T-cell (primary cell): ENCODE measurements at regions of chr3 and their contacts with region 1.

Region 1: DNA sequence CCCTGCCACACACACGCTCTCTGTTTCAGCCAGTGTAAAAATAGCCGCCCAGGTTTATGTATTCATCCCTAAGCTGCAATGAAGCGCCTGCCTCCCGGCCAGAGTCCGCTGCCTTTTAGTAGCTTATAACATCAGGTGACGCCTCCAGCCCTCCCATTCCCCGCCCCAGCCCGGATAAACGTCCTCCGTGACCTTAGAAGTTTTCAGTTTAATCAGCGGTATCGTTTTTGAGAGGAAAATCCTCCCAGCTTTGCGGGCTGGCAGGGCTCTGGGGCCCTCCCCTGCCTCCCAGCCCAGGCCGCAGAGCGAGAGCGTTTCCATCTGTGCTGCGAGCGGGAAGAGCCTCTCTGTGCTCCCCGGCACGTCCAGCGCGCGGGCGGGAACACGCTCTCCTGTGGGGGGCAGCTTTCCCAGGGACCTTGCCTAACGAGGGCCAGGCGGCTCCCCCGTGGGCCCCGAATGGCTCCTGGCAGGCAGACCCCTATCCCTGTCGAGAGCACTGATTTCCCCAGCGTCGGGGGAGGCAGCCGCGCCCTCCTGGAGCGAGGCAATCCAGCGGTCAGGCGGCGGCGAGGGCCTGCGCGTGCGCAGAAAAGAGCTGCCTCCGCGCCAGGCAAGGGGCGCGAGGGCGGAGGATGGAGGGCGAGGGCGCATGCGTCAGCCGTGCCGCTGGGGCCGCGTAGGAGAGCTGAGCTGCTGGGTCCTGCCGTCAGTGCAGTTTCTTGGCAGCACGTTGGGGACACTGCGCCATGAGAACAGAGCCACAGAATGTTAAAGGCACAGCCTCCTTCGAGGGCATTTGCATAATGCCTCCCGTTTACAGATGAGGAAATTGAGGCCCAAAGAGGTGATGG is 71.1 kb downstream of the CCNL1 start:
- DNase-seq: peak; percentile 83 to 97 (median 91)
- ATAC-seq: peak; percentile 91 to 98 (median 96)
- H3K4me3 ChIP-seq: peak overlapping the region; percentile 80 to 93
- H3K4me3 Mint-ChIP-seq: peak overlapping the region; percentile 84 to 87 (median 86)
- H3K27ac ChIP-seq: peak overlapping the region; percentile 97
- H3K27ac Mint-ChIP-seq: peak overlapping the region; percentile 95 to 97
- H3K4me1 ChIP-seq: peaks cover 7 to 36% of the 10 kb centered on the region in 2 experiments
- H3K4me1 Mint-ChIP-seq: peaks cover 23 to 41% (median 31%) of the 10 kb centered on the region in 3 donors
- H3K27me3 ChIP-seq: no peaks in the 10 kb centered on the region
- H3K27me3 Mint-ChIP-seq: no peaks in the 10 kb centered on the region

Region 2: DNA sequence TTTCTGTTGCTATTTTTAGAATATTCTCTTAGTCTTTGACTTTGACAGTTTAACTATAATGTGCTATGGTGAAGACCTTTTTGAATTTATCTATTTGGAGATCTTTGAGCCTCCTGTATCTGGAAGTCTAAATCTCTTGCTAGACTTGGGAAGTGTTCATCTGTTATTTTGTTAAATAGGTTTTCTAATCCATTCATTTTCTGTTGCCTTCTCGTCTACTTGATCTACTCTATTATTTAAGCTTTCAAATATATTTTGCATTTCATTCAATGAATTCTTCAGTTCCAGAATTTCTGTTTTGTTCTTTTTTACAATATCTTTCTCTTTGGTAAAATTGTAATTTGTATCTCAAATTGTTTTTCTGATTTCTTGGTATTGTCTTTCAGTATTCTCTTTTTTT is 214.9 kb before region 1 on chr3:
- CTCF ChIA-PET with region 1: no interaction called
- POLR2A ChIA-PET with region 1: no interaction called
- DNase-seq: no peak
- ATAC-seq: no peak
- H3K4me3 ChIP-seq: no peak overlapping the region
- H3K4me3 Mint-ChIP-seq: no peak overlapping the region
- H3K27ac ChIP-seq: no peak overlapping the region
- H3K27ac Mint-ChIP-seq: no peak overlapping the region
- H3K4me1 ChIP-seq: no peaks in the 10 kb centered on the region
- H3K4me1 Mint-ChIP-seq: no peaks in the 10 kb centered on the region
- H3K27me3 ChIP-seq: no peaks in the 10 kb centered on the region
- H3K27me3 Mint-ChIP-seq: peaks cover 0 to 4% of the 10 kb centered on the region in 2 donors

Region 3: DNA sequence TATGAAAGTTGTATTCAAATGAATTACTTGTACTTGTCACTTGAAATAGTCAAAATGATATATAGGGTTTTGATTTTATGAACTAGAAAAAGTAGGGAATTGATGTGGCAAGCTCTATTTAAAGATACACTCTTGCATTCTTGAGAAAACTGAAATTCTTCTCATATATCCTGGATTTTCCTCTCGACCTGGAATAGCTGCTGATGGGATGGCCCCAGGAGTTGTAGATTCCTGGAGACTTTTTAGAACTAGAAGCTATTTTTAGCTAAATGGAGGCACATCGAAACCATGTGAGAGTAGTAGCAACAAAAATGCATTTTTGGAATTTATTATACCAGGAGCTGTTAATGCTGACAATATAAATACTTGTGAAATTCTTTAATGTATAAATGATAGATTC is 136.8 kb before region 1 on chr3:
- CTCF ChIA-PET with region 1: no interaction called
- POLR2A ChIA-PET with region 1: no interaction called
- DNase-seq: no peak
- ATAC-seq: no peak
- H3K4me3 ChIP-seq: no peak overlapping the region
- H3K4me3 Mint-ChIP-seq: no peak overlapping the region
- H3K27ac ChIP-seq: no peak overlapping the region
- H3K27ac Mint-ChIP-seq: no peak overlapping the region
- H3K4me1 ChIP-seq: no peaks in the 10 kb centered on the region
- H3K4me1 Mint-ChIP-seq: no peaks in the 10 kb centered on the region
- H3K27me3 ChIP-seq: no peaks in the 10 kb centered on the region
- H3K27me3 Mint-ChIP-seq: peaks cover 3 to 16% of the 10 kb centered on the region in 2 donors

Region 4: DNA sequence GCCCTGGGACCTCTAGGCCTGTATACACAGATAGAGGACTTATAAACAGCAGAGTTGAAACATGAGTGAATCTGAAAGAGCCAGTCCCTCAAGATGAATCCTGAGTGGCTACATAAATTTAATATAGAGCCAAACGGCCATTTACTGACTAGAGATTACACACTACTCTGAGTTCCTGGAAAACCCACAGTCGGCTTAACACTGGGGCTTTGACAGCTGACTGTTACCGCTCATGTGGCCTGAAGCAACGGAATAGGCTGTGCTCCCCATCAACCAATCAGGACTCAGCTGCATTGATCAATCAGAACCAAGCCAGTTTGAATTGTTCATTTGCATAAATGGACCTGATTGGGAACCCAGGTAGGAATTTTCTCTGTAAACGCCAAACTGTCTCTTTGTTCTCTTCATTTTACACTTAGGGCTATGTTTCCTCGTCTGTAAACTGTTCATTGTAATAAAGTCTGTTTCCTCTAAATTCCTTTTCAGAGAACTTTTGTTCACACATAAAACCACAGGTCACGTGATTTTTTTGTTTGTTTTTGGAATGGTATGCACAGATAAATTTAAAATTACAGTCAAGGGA is 30.6 kb after region 1 on chr3:
- CTCF ChIA-PET with region 1: interaction called in 1 of 2 experiments, 10 read pairs
- POLR2A ChIA-PET with region 1: interaction called, 3 to 6 read pairs
- DNase-seq: peak in 8 of 35 experiments; percentile 7 to 55 (median 17)
- ATAC-seq: peak in 3 of 4 experiments; percentile 41 to 90 (median 84)
- H3K4me3 ChIP-seq: no peak overlapping the region
- H3K4me3 Mint-ChIP-seq: peak overlapping the region in 1 of 3 donors; percentile 15
- H3K27ac ChIP-seq: no peak overlapping the region
- H3K27ac Mint-ChIP-seq: peak overlapping the region in 1 of 2 donors; percentile 33
- H3K4me1 ChIP-seq: peaks cover 0 to 7% of the 10 kb centered on the region in 2 experiments
- H3K4me1 Mint-ChIP-seq: peaks cover 9 to 11% (median 9%) of the 10 kb centered on the region in 3 donors
- H3K27me3 ChIP-seq: no peaks in the 10 kb centered on the region
- H3K27me3 Mint-ChIP-seq: no peaks in the 10 kb centered on the region

Region 5: GRCh38 chr3:157130467-157131251 is 41.8 kb after region 1 on chr3:
- CTCF ChIA-PET with region 1: interaction called, 24 to 35 read pairs
- POLR2A ChIA-PET with region 1: interaction called in 1 of 2 experiments, 12 read pairs
- DNase-seq: peak; percentile 60 to 89 (median 80)
- ATAC-seq: peak; percentile 74 to 77 (median 75)
- H3K4me3 ChIP-seq: peak overlapping the region in 1 of 2 donors; percentile 2
- H3K4me3 Mint-ChIP-seq: peak overlapping the region; percentile 61 to 67 (median 66)
- H3K27ac ChIP-seq: peak overlapping the region; percentile 89
- H3K27ac Mint-ChIP-seq: peak overlapping the region; percentile 98 to 99
- H3K4me1 ChIP-seq: peaks cover 23 to 65% of the 10 kb centered on the region in 2 experiments
- H3K4me1 Mint-ChIP-seq: peaks cover 60 to 76% (median 75%) of the 10 kb centered on the region in 3 donors
- H3K27me3 ChIP-seq: no peaks in the 10 kb centered on the region
- H3K27me3 Mint-ChIP-seq: no peaks in the 10 kb centered on the region

Region 6: DNA sequence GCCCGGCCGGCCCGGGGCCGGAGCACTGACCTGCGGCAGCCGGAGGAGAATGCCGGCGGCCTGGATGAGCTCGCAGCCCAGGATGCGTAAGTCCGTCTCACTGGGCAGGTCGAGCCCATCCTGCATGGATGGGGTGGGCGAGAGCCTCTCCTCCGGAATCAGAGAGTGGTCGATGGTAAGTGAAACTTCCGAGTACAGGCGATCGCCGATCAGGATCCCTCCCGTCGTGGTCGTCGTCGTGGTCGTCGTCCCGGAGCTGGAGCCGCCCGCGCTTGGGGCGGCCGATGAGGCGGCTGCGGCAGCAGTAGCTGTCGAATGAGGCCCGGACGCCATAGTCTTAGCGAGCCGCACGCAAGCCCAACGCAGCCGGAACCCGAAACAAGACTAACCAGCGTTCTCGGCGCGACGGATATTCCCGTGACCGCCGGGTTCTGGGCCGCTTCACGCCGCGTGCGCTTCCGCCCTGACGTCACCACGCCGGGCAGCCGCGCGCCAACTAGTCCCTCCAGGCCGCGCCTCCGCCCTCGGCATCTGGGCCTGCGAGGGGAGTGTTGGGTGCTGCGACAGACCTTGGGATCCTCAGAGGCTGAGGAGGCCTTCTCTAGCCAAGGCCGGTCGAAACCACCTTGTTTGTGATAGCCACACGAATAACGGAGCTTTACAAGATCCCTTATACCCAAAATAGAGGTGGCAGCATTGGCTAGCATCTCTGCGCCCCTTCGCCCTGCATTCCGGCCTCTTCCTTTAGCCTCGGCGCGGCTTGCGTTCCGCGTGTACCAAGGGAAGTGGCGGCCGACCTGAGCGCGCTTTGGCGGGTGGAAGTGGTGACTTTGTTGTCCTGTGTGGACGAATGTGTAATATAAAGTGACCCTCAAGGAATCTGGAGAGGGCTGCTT is 71.2 kb after region 1 on chr3 and contains the start of gene CCNL1:
- CTCF ChIA-PET with region 1: interaction called in 1 of 2 experiments, 8 read pairs
- POLR2A ChIA-PET with region 1: interaction called in 1 of 2 experiments, 21 read pairs
- DNase-seq: peak; percentile 90 to 99 (median 95)
- ATAC-seq: peak; percentile 76 to 83 (median 82)
- H3K4me3 ChIP-seq: peak within 1 kb of the TSS; percentile 95 to 99
- H3K4me3 Mint-ChIP-seq: peak within 1 kb of the TSS; percentile 87 to 99 (median 93)
- H3K27ac ChIP-seq: peak within 1 kb of the TSS; percentile 98
- H3K27ac Mint-ChIP-seq: peak within 1 kb of the TSS; percentile 99 to 100
- H3K4me1 ChIP-seq: peaks cover 21 to 47% of the 10 kb centered on the region in 2 experiments
- H3K4me1 Mint-ChIP-seq: peaks cover 50 to 55% (median 54%) of the 10 kb centered on the region in 3 donors
- H3K27me3 ChIP-seq: no peaks in the 10 kb centered on the region
- H3K27me3 Mint-ChIP-seq: no peaks in the 10 kb centered on the region
- total RNA-seq, gene CCNL1: 271 to 1,140 (median 276) TPM

Region 7: GRCh38 chr3:157174649-157175498 is 86.0 kb after region 1 on chr3:
- CTCF ChIA-PET with region 1: interaction called in 1 of 2 experiments, 3 read pairs
- POLR2A ChIA-PET with region 1: interaction called in 1 of 2 experiments, 11 read pairs
- DNase-seq: peak; percentile 90 to 99 (median 98)
- ATAC-seq: peak; percentile 93 to 96 (median 94)
- H3K4me3 ChIP-seq: peak overlapping the region; percentile 78 to 88
- H3K4me3 Mint-ChIP-seq: peak overlapping the region; percentile 90 to 95 (median 94)
- H3K27ac ChIP-seq: peak overlapping the region; percentile 99
- H3K27ac Mint-ChIP-seq: peak overlapping the region; percentile 96 to 100
- H3K4me1 ChIP-seq: peaks cover 5 to 24% of the 10 kb centered on the region in 2 experiments
- H3K4me1 Mint-ChIP-seq: peaks cover 30 to 33% (median 32%) of the 10 kb centered on the region in 3 donors
- H3K27me3 ChIP-seq: no peaks in the 10 kb centered on the region
- H3K27me3 Mint-ChIP-seq: peaks cover 0 to 4% of the 10 kb centered on the region in 2 donors